Activated CD4-positive, alpha-beta memory T cell treated with anti-CD3 and anti-CD28 coated beads for 36 hours (primary cell): ENCODE measurements at regions of chr11 and their contacts with region 1.

Region 1: DNA sequence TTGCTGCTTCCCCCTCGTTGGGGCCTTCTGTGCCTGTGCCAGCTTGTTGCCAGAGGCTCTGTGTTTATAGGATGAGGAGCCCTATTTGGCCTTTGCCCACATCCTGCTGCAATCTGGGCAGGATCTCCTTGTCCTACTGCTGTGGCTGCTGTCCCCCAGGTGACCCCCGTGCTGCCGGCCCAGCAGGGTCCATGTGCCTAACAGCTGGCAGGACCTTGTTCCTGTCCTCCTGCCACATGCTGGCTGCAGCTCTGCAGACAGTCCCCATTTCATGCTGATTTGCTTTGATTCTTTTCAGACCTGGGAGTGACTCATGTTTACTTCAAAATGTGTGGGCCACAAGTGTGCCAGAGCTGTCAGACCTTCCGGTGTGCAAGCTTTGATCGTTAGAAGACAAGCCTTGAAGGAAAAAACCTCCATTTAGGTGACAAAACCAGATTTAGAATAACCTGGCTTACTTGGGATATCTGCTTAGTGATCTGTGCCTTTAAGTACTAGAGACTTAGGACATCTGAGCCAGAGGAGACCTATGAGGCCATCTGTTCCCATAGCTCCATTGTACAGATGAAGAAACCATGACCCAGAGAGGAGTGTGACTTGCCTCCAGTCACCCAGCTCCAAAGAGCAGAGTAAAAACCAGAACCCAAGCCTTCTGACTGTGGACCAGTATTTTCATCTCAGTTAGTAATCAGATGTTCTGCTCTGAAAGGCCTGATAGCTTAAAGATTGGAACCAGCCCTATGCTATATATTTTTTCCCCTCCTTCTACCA is 11.1 kb downstream of the NAV2 start:
- DNase-seq: peak; percentile 71
- H3K4me3 Mint-ChIP-seq: peak overlapping the region; percentile 18
- H3K27ac Mint-ChIP-seq: peak overlapping the region; percentile 86
- H3K4me1 Mint-ChIP-seq: peaks cover 29% of the 10 kb centered on the region
- H3K27me3 Mint-ChIP-seq: no peaks in the 10 kb centered on the region

Region 2: GRCh38 chr11:19660076-19660475 is 63.7 kb before region 1 on chr11:
- CTCF ChIA-PET with region 1: no interaction called
- POLR2A ChIA-PET with region 1: no interaction called
- intact Hi-C with region 1: loop called (anchors 1 kb)
- DNase-seq: peak; percentile 45
- H3K4me3 Mint-ChIP-seq: no peak overlapping the region
- H3K27ac Mint-ChIP-seq: no peak overlapping the region
- H3K4me1 Mint-ChIP-seq: peaks cover 9% of the 10 kb centered on the region
- H3K27me3 Mint-ChIP-seq: no peaks in the 10 kb centered on the region

Region 3: GRCh38 chr11:19698493-19699292 is 25.1 kb before region 1 on chr11:
- CTCF ChIA-PET with region 1: no interaction called
- POLR2A ChIA-PET with region 1: no interaction called
- intact Hi-C with region 1: no loop called
- DNase-seq: no peak
- H3K4me3 Mint-ChIP-seq: no peak overlapping the region
- H3K27ac Mint-ChIP-seq: no peak overlapping the region
- H3K4me1 Mint-ChIP-seq: no peaks in the 10 kb centered on the region
- H3K27me3 Mint-ChIP-seq: peaks cover 9% of the 10 kb centered on the region

Region 4: GRCh38 chr11:19712281-19713220 is 11.2 kb before region 1 on chr11 and contains the start of gene NAV2:
- CTCF ChIA-PET with region 1: no interaction called
- POLR2A ChIA-PET with region 1: interaction called, 17 read pairs
- intact Hi-C with region 1: loop called (anchors 1 kb)
- DNase-seq: peak; percentile 85
- H3K4me3 Mint-ChIP-seq: peak within 1 kb of the TSS; percentile 81
- H3K27ac Mint-ChIP-seq: peak within 1 kb of the TSS; percentile 78
- H3K4me1 Mint-ChIP-seq: peaks cover 23% of the 10 kb centered on the region
- H3K27me3 Mint-ChIP-seq: peaks cover 16% of the 10 kb centered on the region
- total RNA-seq, gene NAV2: 0.75 to 0.86 TPM

Region 5: GRCh38 chr11:19777377-19778102 is 53.8 kb after region 1 on chr11:
- CTCF ChIA-PET with region 1: no interaction called
- POLR2A ChIA-PET with region 1: interaction called, 3 read pairs
- intact Hi-C with region 1: loop called (anchors 5 kb)
- DNase-seq: peak; percentile 31
- H3K4me3 Mint-ChIP-seq: peak overlapping the region; percentile 63
- H3K27ac Mint-ChIP-seq: no peak overlapping the region
- H3K4me1 Mint-ChIP-seq: peaks cover 15% of the 10 kb centered on the region
- H3K27me3 Mint-ChIP-seq: peaks cover 44% of the 10 kb centered on the region